Activated CD4-positive, alpha-beta memory T cell treated with anti-CD3 and anti-CD28 coated beads, Interleukin-2, amount 10 ng/mL, durations not matched to agents 7 days and 5 days (primary cell): ENCODE measurements at regions of chr19 and their contacts with region 1.

Region 1: GRCh38 chr19:44723952-44724319 is 24.6 kb upstream of the BCL3 start:
- DNase-seq: peak; percentile 85
- H3K4me3 Mint-ChIP-seq: peak overlapping the region; percentile 18
- H3K27ac Mint-ChIP-seq: no peak overlapping the region
- H3K4me1 Mint-ChIP-seq: peaks cover 58% of the 10 kb centered on the region
- H3K27me3 Mint-ChIP-seq: no peaks in the 10 kb centered on the region

Region 2: GRCh38 chr19:44689056-44689895 is 34.7 kb before region 1 on chr19:
- CTCF ChIA-PET with region 1: interaction called, 52 read pairs
- POLR2A ChIA-PET with region 1: interaction called, 8 read pairs
- DNase-seq: peak; percentile 77
- H3K4me3 Mint-ChIP-seq: no peak overlapping the region
- H3K27ac Mint-ChIP-seq: no peak overlapping the region
- H3K4me1 Mint-ChIP-seq: peaks cover 38% of the 10 kb centered on the region
- H3K27me3 Mint-ChIP-seq: peaks cover 29% of the 10 kb centered on the region

Region 3: GRCh38 chr19:44734986-44735385 is 11.1 kb after region 1 on chr19:
- CTCF ChIA-PET with region 1: interaction called, 26 read pairs
- POLR2A ChIA-PET with region 1: interaction called, 4 read pairs
- DNase-seq: no peak
- H3K4me3 Mint-ChIP-seq: no peak overlapping the region
- H3K27ac Mint-ChIP-seq: no peak overlapping the region
- H3K4me1 Mint-ChIP-seq: peaks cover 22% of the 10 kb centered on the region
- H3K27me3 Mint-ChIP-seq: peaks cover 2% of the 10 kb centered on the region

Region 4: DNA sequence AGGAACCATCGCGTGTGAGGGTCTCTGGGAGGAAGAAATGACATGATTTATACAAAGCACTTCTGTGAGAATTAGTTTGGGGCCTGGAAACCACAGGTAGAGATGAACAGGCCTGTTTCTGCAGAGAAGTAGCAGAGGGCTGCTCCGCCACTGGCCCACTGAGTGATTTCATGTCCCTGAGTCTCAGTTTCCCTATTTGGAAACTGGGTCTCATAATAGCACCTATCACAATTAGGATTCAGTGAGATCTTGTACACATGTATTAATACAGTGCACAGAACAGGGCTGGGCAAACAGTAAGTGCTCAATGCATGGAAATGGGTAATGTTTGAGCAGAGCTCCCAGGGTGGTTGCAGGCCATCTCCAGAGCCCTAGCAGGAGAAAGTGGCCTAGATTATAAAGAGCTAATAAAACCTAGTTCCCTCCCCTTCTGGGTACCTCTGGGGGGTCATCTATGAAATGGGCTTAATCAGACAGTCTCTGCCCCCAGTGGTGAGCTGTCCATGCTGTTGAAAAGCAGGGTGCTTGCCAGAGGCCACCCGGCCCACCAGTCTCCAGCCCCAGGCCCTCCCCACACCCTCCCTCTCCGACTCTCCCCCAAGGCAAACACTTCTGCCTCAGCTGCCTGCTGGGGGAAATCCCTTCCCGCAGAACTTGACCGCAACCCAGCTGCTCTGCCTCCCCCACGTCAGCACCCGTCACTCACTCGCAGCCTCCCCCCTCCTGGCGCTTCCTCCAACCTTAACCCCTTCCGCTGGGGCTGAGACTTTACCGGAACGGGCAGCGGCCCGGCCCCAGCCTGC is 29.1 kb after region 1 on chr19:
- CTCF ChIA-PET with region 1: interaction called, 36 read pairs
- POLR2A ChIA-PET with region 1: interaction called, 23 read pairs
- DNase-seq: peak; percentile 98
- H3K4me3 Mint-ChIP-seq: peak overlapping the region; percentile 87
- H3K27ac Mint-ChIP-seq: peak overlapping the region; percentile 97
- H3K4me1 Mint-ChIP-seq: peaks cover 70% of the 10 kb centered on the region
- H3K27me3 Mint-ChIP-seq: no peaks in the 10 kb centered on the region

Region 5: DNA sequence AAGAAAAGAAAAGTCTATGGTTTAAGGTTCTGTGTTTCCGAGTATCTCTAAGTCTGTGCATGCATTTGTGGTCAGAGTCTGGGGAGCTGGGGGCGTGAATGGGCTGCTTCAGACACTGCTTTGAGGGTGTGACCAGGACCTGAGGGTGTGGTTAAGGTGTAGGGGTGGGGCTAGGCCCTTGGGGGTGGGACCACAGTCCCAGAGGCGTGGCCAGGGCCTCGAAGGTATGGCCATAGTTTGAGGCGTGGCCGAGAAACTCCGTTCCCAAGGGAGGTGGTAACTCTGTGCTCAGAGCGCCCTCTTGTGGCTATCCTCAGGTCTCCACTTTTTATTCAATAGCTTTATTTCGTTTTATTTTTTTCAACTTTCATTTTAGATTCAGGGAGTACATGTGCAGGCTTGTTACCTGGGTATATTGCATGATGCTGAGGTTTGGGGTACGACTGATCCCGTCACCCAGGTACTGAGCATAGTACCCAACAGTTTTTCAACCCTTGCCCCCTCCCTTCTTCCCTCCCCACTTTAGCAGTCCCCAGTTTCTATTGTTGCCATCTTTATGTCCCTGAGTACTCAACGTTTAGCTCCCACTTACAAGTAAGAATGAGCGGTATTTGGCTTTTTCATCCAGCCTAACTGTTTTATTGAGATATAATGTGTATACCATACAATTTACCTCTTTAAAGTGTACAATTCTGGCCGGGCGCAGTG is 46.8 kb after region 1 on chr19:
- CTCF ChIA-PET with region 1: interaction called, 336 read pairs
- POLR2A ChIA-PET with region 1: interaction called, 84 read pairs
- DNase-seq: peak; percentile 99
- H3K4me3 Mint-ChIP-seq: peak overlapping the region; percentile 48
- H3K27ac Mint-ChIP-seq: peak overlapping the region; percentile 58
- H3K4me1 Mint-ChIP-seq: peaks cover 40% of the 10 kb centered on the region
- H3K27me3 Mint-ChIP-seq: peaks cover 8% of the 10 kb centered on the region

Region 6: DNA sequence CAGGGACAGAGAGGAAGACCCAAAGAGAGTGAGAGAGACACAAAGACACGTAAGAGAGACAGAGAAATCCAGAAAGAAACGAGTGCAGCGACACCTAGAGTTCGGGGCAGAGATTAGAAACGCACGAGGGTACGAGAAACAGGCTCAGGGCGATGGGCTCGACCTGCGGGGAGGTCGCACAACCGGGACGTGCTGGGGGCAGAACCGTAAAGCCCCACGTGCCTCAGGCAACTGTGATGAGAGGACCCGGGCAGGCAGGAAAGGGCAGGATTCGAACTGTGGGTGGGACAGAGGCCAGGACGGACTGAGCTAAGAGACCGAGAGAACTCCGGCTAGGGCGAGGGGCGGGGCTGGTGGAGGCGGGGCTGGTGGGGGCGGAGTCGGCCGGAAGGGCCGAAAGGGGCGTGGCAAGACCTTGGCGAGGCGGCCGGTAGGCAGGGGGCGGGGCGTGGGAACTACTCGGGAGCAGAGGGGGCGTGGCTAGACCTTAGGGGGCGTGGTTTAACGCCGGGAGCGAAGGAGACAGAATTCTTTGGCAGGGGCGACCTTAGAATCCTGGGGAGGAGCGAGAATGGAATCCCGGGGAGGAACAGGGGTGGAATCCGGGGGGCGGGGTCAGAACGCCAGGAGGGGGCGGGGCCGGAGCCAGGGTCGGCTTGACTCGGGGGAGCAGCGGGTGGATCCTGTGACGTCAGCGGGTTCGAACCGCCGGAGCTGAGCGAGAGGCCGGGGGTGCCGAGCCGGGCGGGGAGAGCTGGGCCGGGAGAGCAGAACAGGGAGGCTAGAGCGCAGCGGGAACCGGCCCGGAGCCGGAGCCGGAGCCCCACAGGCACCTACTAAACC is 121.9 kb after region 1 on chr19 and contains the start of gene NECTIN2:
- CTCF ChIA-PET with region 1: interaction called, 17 read pairs
- POLR2A ChIA-PET with region 1: no interaction called
- DNase-seq: peak; percentile 90
- H3K4me3 Mint-ChIP-seq: peak within 1 kb of the TSS; percentile 80
- H3K27ac Mint-ChIP-seq: peak within 1 kb of the TSS; percentile 40
- H3K4me1 Mint-ChIP-seq: peaks cover 26% of the 10 kb centered on the region
- H3K27me3 Mint-ChIP-seq: peaks cover 34% of the 10 kb centered on the region
- total RNA-seq, gene NECTIN2: 0.25 to 0.38 TPM